K562 (cell line): ENCODE measurements at regions of chr17 and their contacts with region 1.

Region 1: GRCh38 chr17:67824735-67825626 is at the start of gene BPTF:
- DNase-seq: peak; percentile 82 to 95 (median 86)
- ATAC-seq: peak; percentile 93
- H3K4me3 ChIP-seq: peak within 1 kb of the TSS; percentile 88
- H3K27ac ChIP-seq: peak within 1 kb of the TSS; percentile 88
- H3K4me1 ChIP-seq: peaks cover 7 to 17% of the 10 kb centered on the region in 2 experiments; a peak in 4 of 5 replicates
- H3K27me3 ChIP-seq: no peaks in the 10 kb centered on the region
- CTCF ChIP-seq: peak; percentile 88 to 94 (median 93)
- EP300 ChIP-seq: no peak; the same call in 1 of the 2 replicates
- POLR2A ChIP-seq: peak; percentile 70
- RAD21 ChIP-seq: peak; percentile 62 to 79
- polyA plus RNA-seq, gene BPTF: 12.5 to 25.3 TPM

Region 2: DNA sequence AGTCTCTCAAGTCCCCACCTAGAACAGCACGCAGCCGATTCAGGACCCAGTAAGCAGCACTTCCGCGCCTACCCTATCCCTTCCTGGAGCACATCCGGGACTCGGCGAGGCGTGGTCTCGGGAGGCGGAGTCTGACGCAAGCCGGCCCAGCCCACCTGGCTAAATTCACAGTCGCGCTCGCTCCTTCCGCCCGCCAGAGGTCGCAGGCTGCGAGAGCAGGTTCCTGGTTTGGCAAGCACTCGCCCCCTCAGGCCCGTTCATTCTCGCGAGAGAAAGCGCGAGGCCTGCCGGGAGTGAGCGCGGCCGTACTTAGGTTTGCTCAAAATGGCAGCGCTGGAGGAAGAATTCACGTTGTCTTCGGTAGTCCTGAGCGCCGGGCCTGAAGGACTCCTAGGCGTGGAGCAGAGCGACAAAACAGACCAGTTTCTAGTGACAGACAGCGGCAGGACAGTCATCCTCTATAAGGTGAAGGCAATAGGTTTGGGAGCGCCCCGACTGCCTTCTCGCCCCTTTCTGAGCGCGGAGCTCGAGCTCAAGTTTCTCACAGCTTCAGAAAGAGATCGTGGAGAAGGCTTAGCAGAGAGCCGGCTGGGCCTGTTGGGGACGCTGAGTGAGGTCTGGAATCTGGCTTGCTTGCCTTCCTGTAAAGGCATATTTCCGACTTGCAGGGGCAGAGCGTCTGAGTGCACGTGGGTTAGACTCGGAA is 107.2 kb before region 1 on chr17 and contains the start of gene NOL11:
- CTCF ChIA-PET with region 1: interaction called, 9 read pairs
- POLR2A ChIA-PET with region 1: interaction called, 4 read pairs
- in situ Hi-C with region 1: no loop called
- intact Hi-C with region 1: loop called (anchors 1 kb)
- DNase-seq: peak; percentile 96 to 99 (median 97)
- ATAC-seq: peak; percentile 98
- H3K4me3 ChIP-seq: peak within 1 kb of the TSS; percentile 75
- H3K27ac ChIP-seq: peak within 1 kb of the TSS; percentile 90
- H3K4me1 ChIP-seq: 0 out of 5 replicates have a peak, but pooled peaks cover 0 to 5% of the 10 kb centered on the region in 2 experiments
- H3K27me3 ChIP-seq: no peaks in the 10 kb centered on the region
- CTCF ChIP-seq: peak; percentile 91 to 97 (median 95)
- EP300 ChIP-seq: peak; percentile 60; the same call in 1 of the 2 replicates
- POLR2A ChIP-seq: peak; percentile 97
- RAD21 ChIP-seq: peak; percentile 69 to 83
- polyA plus RNA-seq, gene NOL11: 130 to 175 TPM

Region 3: DNA sequence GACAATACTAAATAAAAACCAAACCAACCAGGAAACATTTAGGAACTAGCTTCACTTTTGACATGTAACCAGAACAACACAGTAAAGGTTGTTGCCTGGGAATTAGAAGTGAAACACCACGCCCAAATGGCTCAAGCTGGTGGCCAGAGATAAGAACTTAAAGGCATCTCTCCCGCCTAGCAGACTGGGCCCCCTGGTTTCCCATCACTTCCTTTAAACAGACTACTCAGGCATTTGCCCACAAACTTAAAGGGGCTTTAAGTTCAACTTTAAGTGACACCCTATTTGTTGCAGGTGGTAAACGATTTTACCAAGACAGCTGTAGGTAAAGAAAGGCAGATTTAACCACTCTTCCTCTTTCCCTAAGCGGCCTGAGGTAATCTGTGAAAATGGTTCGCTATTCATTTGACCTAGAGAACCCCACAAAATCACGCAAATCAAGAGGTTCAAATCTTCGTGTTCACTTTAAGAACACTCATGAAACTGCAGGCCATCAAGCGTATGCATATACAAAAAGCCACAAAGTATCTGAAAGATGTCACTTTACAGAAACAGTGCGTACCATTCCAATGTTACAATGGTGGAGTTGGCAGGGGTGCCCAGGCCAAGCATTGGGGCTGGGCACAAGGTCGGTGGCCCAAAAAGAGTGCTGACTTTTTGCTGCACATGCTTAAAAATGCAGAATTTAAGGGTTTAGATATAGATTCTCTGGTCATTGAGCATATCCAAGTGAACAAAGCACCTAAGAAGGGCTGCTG is 40.4 kb before region 1 on chr17:
- CTCF ChIA-PET with region 1: no interaction called
- POLR2A ChIA-PET with region 1: interaction called, 8 read pairs
- in situ Hi-C with region 1: no loop called
- intact Hi-C with region 1: loop called (anchors 2 kb)
- DNase-seq: peak; percentile 85 to 96 (median 89)
- ATAC-seq: peak; percentile 85
- H3K4me3 ChIP-seq: no peak overlapping the region; the same call in 1 of the 2 replicates
- H3K27ac ChIP-seq: peak overlapping the region; percentile 90
- H3K4me1 ChIP-seq: peaks cover 31 to 33% of the 10 kb centered on the region in 2 experiments
- H3K27me3 ChIP-seq: no peaks in the 10 kb centered on the region
- CTCF ChIP-seq: no peak
- EP300 ChIP-seq: peak; percentile 97
- POLR2A ChIP-seq: no peak
- RAD21 ChIP-seq: peak; percentile 2 to 21; a peak in 1 of 4 replicates

Region 4: GRCh38 chr17:67800495-67800928 is 24.5 kb before region 1 on chr17:
- CTCF ChIA-PET with region 1: interaction called, 4 read pairs
- POLR2A ChIA-PET with region 1: interaction called, 5 read pairs
- in situ Hi-C with region 1: no loop called
- intact Hi-C with region 1: loop called (anchors 1 kb)
- DNase-seq: peak; percentile 69 to 90 (median 78)
- ATAC-seq: peak; percentile 95
- H3K4me3 ChIP-seq: no peak overlapping the region
- H3K27ac ChIP-seq: no peak overlapping the region
- H3K4me1 ChIP-seq: peaks cover 9 to 19% of the 10 kb centered on the region in 2 experiments; a peak in 4 of 5 replicates
- H3K27me3 ChIP-seq: no peaks in the 10 kb centered on the region
- CTCF ChIP-seq: peak; percentile 83 to 86 (median 83)
- EP300 ChIP-seq: no peak
- POLR2A ChIP-seq: no peak
- RAD21 ChIP-seq: peak; percentile 74 to 81